B cell (primary cell): ENCODE measurements at regions of chr19 and their contacts with region 1.

Region 1: DNA sequence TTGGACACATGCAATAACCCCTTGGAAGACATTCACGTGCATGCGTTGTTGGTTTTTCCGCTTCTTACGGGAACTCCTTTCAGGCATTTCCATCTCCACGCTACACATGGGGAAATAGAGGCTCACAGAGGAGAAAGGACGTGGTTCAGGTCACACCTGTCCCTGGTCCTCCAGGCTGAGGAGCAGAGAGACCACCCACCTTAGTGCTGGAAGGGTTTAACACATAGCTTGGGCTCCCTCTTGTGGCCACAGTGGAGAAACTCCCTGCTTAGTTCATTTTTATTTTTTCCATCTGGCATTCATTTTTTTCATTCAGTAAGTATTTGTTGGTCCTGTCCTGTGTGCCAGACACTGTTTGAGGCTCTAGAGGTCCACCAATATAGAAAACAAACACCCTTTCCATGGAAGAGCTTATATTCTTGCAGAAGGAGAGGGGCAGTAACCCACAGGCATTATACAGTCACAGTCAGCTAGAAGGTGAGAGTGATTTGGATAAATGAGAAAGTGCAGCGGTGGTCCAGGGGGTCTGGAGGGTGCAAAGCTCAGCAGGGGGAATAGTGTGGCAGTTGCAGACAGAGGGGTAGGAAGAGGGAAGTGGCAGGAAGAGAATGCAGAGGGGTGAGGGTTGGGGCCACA is 24.2 kb upstream of the TTYH1 start:
- DNase-seq: peak; percentile 85
- ATAC-seq: peak; percentile 34
- H3K4me3 ChIP-seq: no peak overlapping the region
- H3K4me3 Mint-ChIP-seq: peak overlapping the region; percentile 68
- H3K27ac ChIP-seq: no peak overlapping the region
- H3K27ac Mint-ChIP-seq: peak overlapping the region; percentile 73
- H3K4me1 ChIP-seq: peaks cover 41 to 50% of the 10 kb centered on the region in 2 donors
- H3K4me1 Mint-ChIP-seq: peaks cover 46% of the 10 kb centered on the region
- H3K27me3 ChIP-seq: peaks cover 0 to 1% (median 0%) of the 10 kb centered on the region in 4 experiments
- H3K27me3 Mint-ChIP-seq: peaks cover 17% of the 10 kb centered on the region
- CTCF ChIP-seq: peak; percentile 94

Region 2: GRCh38 chr19:54168174-54168917 is 222.7 kb before region 1 on chr19:
- CTCF ChIA-PET with region 1: interaction called, 5 read pairs
- POLR2A ChIA-PET with region 1: no interaction called
- intact Hi-C with region 1: loop called (anchors 2 kb)
- DNase-seq: peak; percentile 89
- ATAC-seq: peak; percentile 89
- H3K4me3 ChIP-seq: no peak overlapping the region
- H3K4me3 Mint-ChIP-seq: no peak overlapping the region
- H3K27ac ChIP-seq: no peak overlapping the region
- H3K27ac Mint-ChIP-seq: no peak overlapping the region
- H3K4me1 ChIP-seq: peaks cover 18 to 22% of the 10 kb centered on the region in 2 donors
- H3K4me1 Mint-ChIP-seq: peaks cover 24% of the 10 kb centered on the region
- H3K27me3 ChIP-seq: peaks cover 0 to 23% (median 13%) of the 10 kb centered on the region in 4 experiments
- H3K27me3 Mint-ChIP-seq: peaks cover 16% of the 10 kb centered on the region
- CTCF ChIP-seq: peak; percentile 89

Region 3: GRCh38 chr19:54345938-54346386 is 45.1 kb before region 1 on chr19:
- CTCF ChIA-PET with region 1: interaction called, 17 read pairs
- POLR2A ChIA-PET with region 1: no interaction called
- intact Hi-C with region 1: no loop called
- DNase-seq: peak; percentile 80
- ATAC-seq: peak; percentile 97
- H3K4me3 ChIP-seq: peak overlapping the region in 3 of 5 experiments; percentile 21 to 52 (median 27)
- H3K4me3 Mint-ChIP-seq: peak overlapping the region; percentile 81
- H3K27ac ChIP-seq: peak overlapping the region; percentile 72
- H3K27ac Mint-ChIP-seq: peak overlapping the region; percentile 85
- H3K4me1 ChIP-seq: peaks cover 78 to 85% of the 10 kb centered on the region in 2 donors
- H3K4me1 Mint-ChIP-seq: peaks cover 73% of the 10 kb centered on the region
- H3K27me3 ChIP-seq: peaks cover 0 to 2% (median 0%) of the 10 kb centered on the region in 4 experiments
- H3K27me3 Mint-ChIP-seq: no peaks in the 10 kb centered on the region
- CTCF ChIP-seq: no peak

Region 4: DNA sequence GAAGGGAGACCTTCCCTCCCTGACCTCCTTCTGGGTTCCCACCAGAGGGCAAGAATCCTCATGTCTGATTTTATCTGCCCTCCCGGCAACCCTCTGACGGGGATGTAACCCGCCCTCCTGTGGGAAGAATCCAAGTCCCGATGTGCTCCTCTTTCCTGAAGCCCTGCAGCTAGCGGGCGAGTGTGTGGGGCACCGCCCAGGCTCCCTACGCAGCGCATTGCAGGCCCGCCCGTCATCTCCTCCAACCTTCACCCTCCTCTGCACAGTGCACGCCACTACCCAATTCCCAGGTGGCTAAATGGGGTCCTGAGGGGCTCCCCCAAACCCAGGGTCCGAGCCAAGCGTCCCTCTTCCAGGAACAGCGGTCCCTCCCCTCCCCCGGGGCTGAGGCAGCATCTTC is 33.7 kb before region 1 on chr19:
- CTCF ChIA-PET with region 1: interaction called, 47 read pairs
- POLR2A ChIA-PET with region 1: interaction called, 5 read pairs
- intact Hi-C with region 1: loop called (anchors 2 kb)
- DNase-seq: no peak
- ATAC-seq: no peak
- H3K4me3 ChIP-seq: no peak overlapping the region
- H3K4me3 Mint-ChIP-seq: no peak overlapping the region
- H3K27ac ChIP-seq: no peak overlapping the region
- H3K27ac Mint-ChIP-seq: no peak overlapping the region
- H3K4me1 ChIP-seq: peaks cover 24 to 37% of the 10 kb centered on the region in 2 donors
- H3K4me1 Mint-ChIP-seq: peaks cover 41% of the 10 kb centered on the region
- H3K27me3 ChIP-seq: no peaks in the 10 kb centered on the region
- H3K27me3 Mint-ChIP-seq: no peaks in the 10 kb centered on the region
- CTCF ChIP-seq: no peak

Region 5: GRCh38 chr19:54373781-54374631 is 17.1 kb before region 1 on chr19:
- CTCF ChIA-PET with region 1: interaction called, 72 read pairs
- POLR2A ChIA-PET with region 1: interaction called, 6 read pairs
- intact Hi-C with region 1: loop called (anchors 1 kb)
- DNase-seq: no peak
- ATAC-seq: no peak
- H3K4me3 ChIP-seq: no peak overlapping the region
- H3K4me3 Mint-ChIP-seq: peak overlapping the region; percentile 27
- H3K27ac ChIP-seq: no peak overlapping the region
- H3K27ac Mint-ChIP-seq: peak overlapping the region; percentile 78
- H3K4me1 ChIP-seq: peaks cover 65 to 80% of the 10 kb centered on the region in 2 donors
- H3K4me1 Mint-ChIP-seq: peaks cover 78% of the 10 kb centered on the region
- H3K27me3 ChIP-seq: no peaks in the 10 kb centered on the region
- H3K27me3 Mint-ChIP-seq: no peaks in the 10 kb centered on the region
- CTCF ChIP-seq: no peak